BJ (cell line): ENCODE measurements at regions of chr1 and their contacts with region 1.

Region 1: GRCh38 chr1:88877382-88877825 is 14.0 kb downstream of the GTF2B start:
- DNase-seq: no peak
- H3K4me3 ChIP-seq: no peak overlapping the region
- H3K27me3 ChIP-seq: no peaks in the 10 kb centered on the region
- CTCF ChIP-seq: peak; percentile 43

Region 2: DNA sequence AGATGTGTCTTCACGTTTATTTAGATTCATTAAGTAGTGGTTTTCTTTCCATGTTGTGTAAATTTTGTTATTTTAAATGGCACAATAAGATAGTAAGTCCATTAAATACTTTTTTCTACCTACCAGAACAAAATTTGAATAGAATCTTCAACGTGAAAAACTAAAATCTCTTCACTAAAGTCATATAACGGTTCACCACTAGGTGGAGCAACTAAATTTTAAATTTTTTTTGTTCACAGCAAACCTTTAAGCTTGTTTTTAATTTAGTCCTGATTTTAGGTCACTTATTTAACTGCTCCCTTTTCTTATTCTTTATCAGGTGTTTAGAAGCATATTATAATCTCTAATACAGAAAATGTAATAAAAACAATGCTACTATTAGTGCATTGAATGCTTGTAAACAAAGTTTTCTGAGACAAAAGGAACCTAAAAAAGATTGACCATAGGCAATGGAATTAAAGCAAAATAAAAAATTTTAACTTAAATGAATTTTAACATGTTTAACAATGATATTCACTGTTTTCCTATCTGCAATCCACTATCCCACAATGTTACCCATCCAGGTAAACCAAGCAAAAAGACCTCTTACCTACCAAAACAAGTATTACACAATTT is 221.6 kb before region 1 on chr1:
- CTCF ChIA-PET with region 1: interaction called, 33 read pairs
- POLR2A ChIA-PET with region 1: no interaction called
- DNase-seq: peak; percentile 1
- H3K4me3 ChIP-seq: no peak overlapping the region
- H3K27me3 ChIP-seq: no peaks in the 10 kb centered on the region
- CTCF ChIP-seq: peak; percentile 57

Region 3: GRCh38 chr1:88683541-88684481 is 193.6 kb before region 1 on chr1 and contains the start of gene PKN2:
- CTCF ChIA-PET with region 1: interaction called, 11 read pairs
- POLR2A ChIA-PET with region 1: no interaction called
- DNase-seq: peak; percentile 92
- H3K4me3 ChIP-seq: peak within 1 kb of the TSS; percentile 98
- H3K27me3 ChIP-seq: no peaks in the 10 kb centered on the region
- CTCF ChIP-seq: peak; percentile 29
- polyA plus RNA-seq, gene PKN2: 9.5 and 21.5 TPM in 2 replicates

Region 4: GRCh38 chr1:88736639-88737248 is 140.7 kb before region 1 on chr1:
- CTCF ChIA-PET with region 1: interaction called, 30 read pairs
- POLR2A ChIA-PET with region 1: no interaction called
- DNase-seq: no peak
- H3K4me3 ChIP-seq: no peak overlapping the region
- H3K27me3 ChIP-seq: no peaks in the 10 kb centered on the region
- CTCF ChIP-seq: peak; percentile 75

Region 5: DNA sequence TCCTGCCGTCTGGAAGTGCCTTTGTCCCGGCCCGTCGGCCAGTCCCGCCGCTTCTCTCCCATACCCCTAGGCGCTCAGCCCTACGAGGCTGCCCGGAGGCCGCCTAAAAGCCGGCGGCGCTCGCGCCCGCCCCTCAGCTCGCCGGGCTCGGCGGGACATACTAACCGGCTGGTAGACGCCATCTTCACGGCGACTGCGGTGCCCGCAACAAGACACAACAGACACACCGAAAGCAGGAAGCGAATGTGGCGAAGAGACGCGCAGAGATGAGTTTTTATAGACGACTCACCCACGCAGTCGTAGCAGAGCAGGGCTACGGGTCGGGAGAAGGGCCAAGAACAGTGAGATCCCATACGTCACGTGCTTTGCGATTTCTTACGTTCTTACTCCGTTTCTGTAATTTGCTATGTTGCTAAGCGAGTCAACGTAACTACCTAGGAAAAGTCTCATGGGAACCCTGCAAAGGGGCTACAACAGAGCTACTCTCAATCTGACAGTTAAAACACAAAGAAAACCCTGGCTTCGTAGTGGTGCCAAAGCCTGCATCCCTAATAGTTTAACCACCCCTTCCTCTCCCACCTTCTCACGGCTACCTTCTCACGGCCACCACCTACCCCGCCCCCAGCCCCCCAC is 14.0 kb after region 1 on chr1 and contains the start of gene GTF2B:
- CTCF ChIA-PET with region 1: interaction called, 18 read pairs
- POLR2A ChIA-PET with region 1: no interaction called
- DNase-seq: peak; percentile 77
- H3K4me3 ChIP-seq: peak within 1 kb of the TSS; percentile 86
- H3K27me3 ChIP-seq: no peaks in the 10 kb centered on the region
- CTCF ChIP-seq: no peak
- polyA plus RNA-seq, gene GTF2B: 22.4 and 39.4 TPM in 2 replicates

Region 6: GRCh38 chr1:88956003-88956402 is 78.6 kb after region 1 on chr1:
- CTCF ChIA-PET with region 1: no interaction called
- POLR2A ChIA-PET with region 1: no interaction called
- DNase-seq: no peak
- H3K4me3 ChIP-seq: no peak overlapping the region
- H3K27me3 ChIP-seq: no peaks in the 10 kb centered on the region
- CTCF ChIP-seq: no peak